HEK293 (cell line): ENCODE measurements at regions of chr2 and their contacts with region 1.

Region 1: DNA sequence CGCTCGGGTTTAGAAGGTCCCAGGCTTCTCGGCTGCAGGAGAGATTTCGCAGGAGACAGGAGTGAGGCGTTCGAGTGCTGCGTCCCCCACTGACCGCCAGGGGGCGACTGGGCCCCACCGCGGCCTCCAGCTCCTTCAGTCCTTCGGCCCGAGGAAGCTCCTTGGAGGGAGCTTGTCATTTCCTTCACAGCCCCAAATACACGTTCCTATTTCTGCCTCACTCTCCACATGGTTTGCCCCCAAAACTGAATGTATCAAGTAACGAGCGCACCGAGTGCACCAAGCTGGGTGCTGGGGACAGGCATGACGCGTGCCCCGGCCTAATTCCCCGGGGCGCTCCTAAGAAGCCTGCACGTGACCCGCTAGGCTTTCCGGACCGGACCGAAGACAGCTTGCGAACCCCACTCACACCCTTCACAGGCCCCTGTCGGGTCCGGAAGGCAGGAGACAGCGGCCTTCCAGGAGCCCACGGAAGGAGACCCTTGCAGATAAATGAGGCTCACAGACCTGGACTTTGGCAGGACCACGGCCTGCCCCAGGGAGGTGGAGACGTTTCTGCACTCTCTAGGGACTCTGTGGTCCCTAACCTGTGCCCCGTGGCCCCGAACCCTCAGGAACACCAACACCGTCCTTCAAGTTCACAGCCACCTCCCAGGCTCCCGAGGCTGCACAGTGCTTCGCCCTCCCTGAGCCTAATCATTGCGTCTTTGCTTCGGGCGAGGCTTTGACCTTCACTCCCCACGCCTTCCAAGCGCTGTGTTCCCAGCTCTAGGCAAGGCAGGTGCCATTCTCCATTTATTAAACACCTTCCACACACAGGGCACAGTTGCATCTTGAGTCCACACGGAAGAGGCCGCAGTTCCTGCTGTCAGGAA is 13.0 kb upstream of the FAHD2A start:
- H3K4me3 ChIP-seq: no peak overlapping the region
- H3K27ac ChIP-seq: no peak overlapping the region
- H3K4me1 ChIP-seq: no peaks in the 10 kb centered on the region
- CTCF ChIP-seq: peak; percentile 84

Region 2: DNA sequence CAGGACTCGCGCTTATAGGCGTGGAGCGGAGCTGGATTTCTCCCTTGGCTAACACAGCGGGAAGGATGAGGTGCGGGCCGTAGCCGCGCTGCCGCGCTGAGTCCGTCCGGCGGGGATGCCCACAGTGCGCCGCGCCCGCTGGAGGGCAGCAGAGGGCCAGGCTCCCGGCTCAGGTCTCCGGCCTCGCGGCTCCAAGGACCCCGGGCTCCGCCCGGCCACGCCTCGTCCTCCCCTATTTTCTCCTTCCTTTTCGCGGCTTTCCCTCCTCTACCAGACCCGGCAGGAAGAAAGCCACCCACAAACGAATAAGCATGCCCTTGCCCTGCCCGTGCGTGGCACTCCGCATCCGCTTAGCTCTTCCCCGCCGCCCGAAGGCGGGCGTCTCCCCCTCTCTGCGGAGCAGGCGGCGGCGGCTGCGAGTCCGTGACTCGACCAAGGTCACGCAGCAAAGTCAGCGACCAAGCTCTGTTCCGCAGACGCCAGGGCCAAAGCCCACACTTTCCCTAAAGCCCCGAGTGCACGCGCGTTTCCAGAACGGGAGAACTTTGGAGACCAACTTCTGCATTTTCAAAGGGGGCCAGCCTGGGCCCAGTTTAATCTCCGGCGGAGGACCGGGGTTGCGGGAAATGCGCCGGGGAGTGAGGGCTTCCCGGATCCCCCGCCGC is 43.8 kb before region 1 on chr2:
- CTCF ChIA-PET with region 1: interaction called, 17 read pairs
- POLR2A ChIA-PET with region 1: no interaction called
- H3K4me3 ChIP-seq: peak overlapping the region; percentile 46
- H3K27ac ChIP-seq: peak overlapping the region; percentile 67; the same call in 1 of the 2 replicates
- H3K4me1 ChIP-seq: no peaks in the 10 kb centered on the region; the same call in 1 of the 2 replicates
- CTCF ChIP-seq: peak; percentile 93

Region 3: GRCh38 chr2:95379371-95379831 is 10.1 kb before region 1 on chr2:
- CTCF ChIA-PET with region 1: interaction called, 31 read pairs
- POLR2A ChIA-PET with region 1: interaction called, 4 read pairs
- H3K4me3 ChIP-seq: no peak overlapping the region
- H3K27ac ChIP-seq: no peak overlapping the region
- H3K4me1 ChIP-seq: no peaks in the 10 kb centered on the region
- CTCF ChIP-seq: 0 out of 2 replicates have a peak, but pooled peaks have one; percentile 13

Region 4: DNA sequence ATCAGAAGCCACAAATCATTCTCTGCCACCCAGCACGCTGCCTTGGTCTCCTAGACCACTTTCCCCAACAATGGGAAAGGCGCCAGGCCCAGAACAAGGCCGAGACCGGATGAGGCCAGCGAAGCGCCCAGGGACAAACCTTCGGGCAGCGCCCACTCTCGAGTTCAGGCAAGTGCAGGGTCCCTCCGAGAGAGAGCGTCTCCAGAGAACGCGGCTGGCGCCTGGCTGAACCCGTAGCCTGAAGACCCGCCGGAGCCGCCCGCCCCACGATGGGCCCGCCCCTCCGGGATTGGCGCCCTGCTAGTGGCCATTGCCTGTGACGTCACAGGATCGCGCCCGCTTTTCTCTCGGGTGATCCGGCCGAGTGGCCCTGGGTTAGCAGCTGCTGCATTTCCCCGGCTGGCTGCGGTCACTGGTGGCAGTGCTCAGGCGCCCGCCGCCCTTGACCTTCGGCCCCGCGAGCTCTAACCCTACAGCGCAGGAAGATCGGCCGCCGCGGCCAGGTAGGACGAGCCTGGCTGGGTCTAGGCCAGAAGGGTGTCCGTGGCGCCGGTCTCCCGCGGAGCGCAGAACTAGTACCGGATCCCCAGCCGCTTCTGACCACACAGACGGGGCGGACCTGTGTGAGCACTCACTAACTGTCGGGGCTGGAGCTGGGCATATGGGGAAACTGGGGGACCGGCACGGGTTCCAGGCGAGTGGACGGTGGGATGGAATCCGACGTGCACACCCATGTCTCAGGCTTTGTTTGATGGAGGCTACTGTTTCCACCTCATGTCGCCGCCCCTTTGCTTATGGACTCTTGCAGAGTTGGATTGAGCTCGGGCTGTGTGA is 13.1 kb after region 1 on chr2 and contains the start of gene FAHD2A:
- CTCF ChIA-PET with region 1: interaction called, 28 read pairs
- POLR2A ChIA-PET with region 1: interaction called, 6 read pairs
- H3K4me3 ChIP-seq: peak within 1 kb of the TSS; percentile 75
- H3K27ac ChIP-seq: peak within 1 kb of the TSS; percentile 74; the same call in 1 of the 2 replicates
- H3K4me1 ChIP-seq: 0 out of 2 replicates have a peak, but pooled peaks cover 2% of the 10 kb centered on the region
- CTCF ChIP-seq: no peak

Region 5: DNA sequence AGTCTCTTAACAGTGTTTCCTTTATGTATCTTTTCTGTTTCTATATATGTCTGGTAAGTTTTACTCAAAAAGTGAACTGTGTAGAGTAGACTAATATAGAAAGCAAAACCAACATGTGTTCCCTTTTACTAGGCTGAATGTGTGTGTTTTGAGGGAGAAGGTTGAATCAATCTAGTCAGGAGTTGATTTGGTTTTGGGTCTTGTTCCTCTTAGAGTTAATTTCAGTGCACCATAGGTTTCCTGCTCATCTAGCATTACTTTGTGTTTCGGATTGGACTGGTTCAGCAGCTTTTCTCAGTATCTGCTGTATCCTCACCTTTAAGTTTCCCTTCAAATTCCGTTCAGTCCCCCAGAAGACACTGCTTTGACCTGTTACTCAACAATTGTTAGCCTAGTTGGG is 150.4 kb after region 1 on chr2:
- CTCF ChIA-PET with region 1: no interaction called
- POLR2A ChIA-PET with region 1: no interaction called
- H3K4me3 ChIP-seq: no peak overlapping the region
- H3K27ac ChIP-seq: no peak overlapping the region
- H3K4me1 ChIP-seq: no peaks in the 10 kb centered on the region
- CTCF ChIP-seq: no peak

Region 6: GRCh38 chr2:95719473-95720060 is 330.1 kb after region 1 on chr2:
- CTCF ChIA-PET with region 1: no interaction called
- POLR2A ChIA-PET with region 1: no interaction called
- H3K4me3 ChIP-seq: no peak overlapping the region
- H3K27ac ChIP-seq: no peak overlapping the region
- H3K4me1 ChIP-seq: no peaks in the 10 kb centered on the region
- CTCF ChIP-seq: no peak